ENCODE measurements at regions of chr7 and their contacts with region 1.

Region 1: GRCh38 chr7:155951554-155952158 is 139.4 kb upstream of the SHH start:
- DNase-seq: peak; percentile 67
- H3K4me3 ChIP-seq: no peak overlapping the region
- H3K27ac ChIP-seq: peak overlapping the region; percentile 90
- H3K4me1 ChIP-seq: peaks cover 10% of the 10 kb centered on the region
- H3K27me3 ChIP-seq: no peaks in the 10 kb centered on the region
- CTCF ChIP-seq: no peak
- POLR2A ChIP-seq: no peak

Region 2: GRCh38 chr7:155815332-155816191 is 136.1 kb before region 1 on chr7:
- CTCF ChIA-PET with region 1: no interaction called
- POLR2A ChIA-PET with region 1: no interaction called
- dilution Hi-C with region 1: no loop called
- intact Hi-C with region 1: loop called (anchors 1 kb)
- DNase-seq: peak; percentile 34
- H3K4me3 ChIP-seq: no peak overlapping the region
- H3K27ac ChIP-seq: no peak overlapping the region
- H3K4me1 ChIP-seq: peaks cover 6% of the 10 kb centered on the region
- H3K27me3 ChIP-seq: peaks cover 34 to 42% of the 10 kb centered on the region in 2 experiments
- CTCF ChIP-seq: peak; percentile 31 to 88
- POLR2A ChIP-seq: no peak

Region 3: GRCh38 chr7:155872678-155873369 is 78.8 kb before region 1 on chr7:
- CTCF ChIA-PET with region 1: no interaction called
- POLR2A ChIA-PET with region 1: no interaction called
- dilution Hi-C with region 1: no loop called
- intact Hi-C with region 1: no loop called
- DNase-seq: no peak
- H3K4me3 ChIP-seq: no peak overlapping the region
- H3K27ac ChIP-seq: no peak overlapping the region
- H3K4me1 ChIP-seq: no peaks in the 10 kb centered on the region
- H3K27me3 ChIP-seq: no peaks in the 10 kb centered on the region
- CTCF ChIP-seq: no peak
- POLR2A ChIP-seq: no peak

Region 4: GRCh38 chr7:155885167-155886155 is 66.2 kb before region 1 on chr7:
- CTCF ChIA-PET with region 1: no interaction called
- POLR2A ChIA-PET with region 1: no interaction called
- dilution Hi-C with region 1: no loop called
- intact Hi-C with region 1: loop called (anchors 1 kb)
- DNase-seq: peak; percentile 81
- H3K4me3 ChIP-seq: no peak overlapping the region
- H3K27ac ChIP-seq: peak overlapping the region; percentile 66
- H3K4me1 ChIP-seq: peaks cover 5% of the 10 kb centered on the region
- H3K27me3 ChIP-seq: no peaks in the 10 kb centered on the region
- CTCF ChIP-seq: no peak
- POLR2A ChIP-seq: no peak

Region 5: DNA sequence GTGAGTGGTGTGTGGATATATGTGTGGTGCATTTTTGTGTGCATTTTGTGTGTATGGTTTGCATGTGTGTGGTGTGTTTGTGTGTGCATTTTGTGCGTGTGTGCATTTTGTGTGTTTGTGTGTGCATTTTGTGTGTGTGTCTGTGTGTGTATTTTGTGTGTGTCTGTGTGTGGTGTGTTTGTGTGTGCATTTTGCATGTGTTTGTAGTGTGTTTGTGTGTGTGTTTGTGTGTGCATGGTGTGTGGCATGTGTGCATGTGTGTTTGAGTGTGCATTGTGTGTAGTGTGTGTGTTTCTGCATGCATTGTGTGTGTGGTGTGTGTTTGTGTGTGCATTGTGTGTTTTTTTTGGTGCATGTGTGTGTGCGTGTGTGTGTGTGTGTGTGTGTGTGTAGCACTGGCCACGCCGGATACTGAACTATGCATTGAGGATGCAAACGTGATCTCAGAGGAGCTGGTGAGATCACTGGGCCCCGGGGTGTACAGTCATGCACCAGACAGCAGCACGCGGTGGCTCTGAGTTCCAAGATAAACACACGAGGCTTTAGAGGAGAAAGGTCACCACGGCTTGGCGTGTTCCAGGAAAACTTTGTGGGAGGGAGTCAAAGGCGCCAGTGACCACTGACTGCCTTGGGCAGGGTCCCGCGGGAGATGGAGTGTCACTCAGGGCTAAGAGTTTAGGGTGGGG is 32.8 kb before region 1 on chr7:
- CTCF ChIA-PET with region 1: no interaction called
- POLR2A ChIA-PET with region 1: no interaction called
- dilution Hi-C with region 1: no loop called
- intact Hi-C with region 1: loop called (anchors 1 kb)
- DNase-seq: peak; percentile 48
- H3K4me3 ChIP-seq: no peak overlapping the region
- H3K27ac ChIP-seq: peak overlapping the region; percentile 10
- H3K4me1 ChIP-seq: peaks cover 2% of the 10 kb centered on the region
- H3K27me3 ChIP-seq: no peaks in the 10 kb centered on the region
- CTCF ChIP-seq: no peak
- POLR2A ChIP-seq: no peak

Region 6: DNA sequence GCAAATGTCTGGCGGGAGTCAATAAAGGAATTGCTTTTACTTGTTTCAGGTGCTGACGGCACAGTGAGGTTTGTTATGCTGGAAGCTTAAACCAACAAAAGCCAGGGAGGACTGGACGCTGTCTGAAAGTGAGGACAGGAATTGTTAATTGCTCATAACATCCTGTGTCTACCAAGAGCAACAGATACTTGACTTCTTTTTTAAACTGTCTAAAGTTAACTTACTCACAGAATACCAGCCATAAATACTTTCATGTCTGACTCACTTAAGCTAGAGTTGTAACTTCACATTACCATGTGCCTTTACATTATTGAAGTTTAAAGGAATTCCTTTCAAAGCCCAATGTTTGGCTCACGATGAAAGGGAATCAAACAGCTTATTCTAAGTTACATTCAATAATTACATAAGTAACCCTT is 113.3 kb after region 1 on chr7:
- CTCF ChIA-PET with region 1: no interaction called
- POLR2A ChIA-PET with region 1: no interaction called
- dilution Hi-C with region 1: no loop called
- intact Hi-C with region 1: loop called (anchors 1 kb)
- DNase-seq: peak; percentile 15
- H3K4me3 ChIP-seq: no peak overlapping the region
- H3K27ac ChIP-seq: no peak overlapping the region
- H3K4me1 ChIP-seq: no peaks in the 10 kb centered on the region
- H3K27me3 ChIP-seq: no peaks in the 10 kb centered on the region
- CTCF ChIP-seq: no peak
- POLR2A ChIP-seq: no peak